G401 (cell line): ENCODE measurements at regions of chr15 and their contacts with region 1.

Region 1: GRCh38 chr15:73617301-73617831 is 15.8 kb downstream of the NPTN start:
- DNase-seq: no peak

Region 2: DNA sequence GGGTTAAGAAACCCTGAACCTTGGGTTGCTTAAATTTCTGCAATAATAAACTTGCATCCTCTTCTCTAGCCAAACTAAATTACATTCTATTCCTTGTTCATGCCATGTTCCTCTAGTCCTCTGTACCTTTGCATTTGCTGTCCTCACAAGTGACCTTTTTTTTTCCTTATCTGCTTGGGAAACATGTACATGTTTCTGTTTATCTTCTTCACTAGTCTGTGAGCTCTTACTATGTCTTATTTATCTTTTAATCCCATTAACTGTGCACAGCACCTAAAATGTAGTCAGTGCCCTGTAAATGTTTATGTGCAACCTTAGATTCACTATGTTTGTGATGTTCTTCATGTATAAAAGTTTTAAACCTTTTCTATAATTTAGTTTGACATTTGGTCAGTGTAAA is 112.5 kb before region 1 on chr15:
- in situ Hi-C with region 1: no loop called
- DNase-seq: no peak

Region 3: GRCh38 chr15:73550190-73550589 is 67.2 kb before region 1 on chr15:
- in situ Hi-C with region 1: no loop called
- DNase-seq: no peak

Region 4: DNA sequence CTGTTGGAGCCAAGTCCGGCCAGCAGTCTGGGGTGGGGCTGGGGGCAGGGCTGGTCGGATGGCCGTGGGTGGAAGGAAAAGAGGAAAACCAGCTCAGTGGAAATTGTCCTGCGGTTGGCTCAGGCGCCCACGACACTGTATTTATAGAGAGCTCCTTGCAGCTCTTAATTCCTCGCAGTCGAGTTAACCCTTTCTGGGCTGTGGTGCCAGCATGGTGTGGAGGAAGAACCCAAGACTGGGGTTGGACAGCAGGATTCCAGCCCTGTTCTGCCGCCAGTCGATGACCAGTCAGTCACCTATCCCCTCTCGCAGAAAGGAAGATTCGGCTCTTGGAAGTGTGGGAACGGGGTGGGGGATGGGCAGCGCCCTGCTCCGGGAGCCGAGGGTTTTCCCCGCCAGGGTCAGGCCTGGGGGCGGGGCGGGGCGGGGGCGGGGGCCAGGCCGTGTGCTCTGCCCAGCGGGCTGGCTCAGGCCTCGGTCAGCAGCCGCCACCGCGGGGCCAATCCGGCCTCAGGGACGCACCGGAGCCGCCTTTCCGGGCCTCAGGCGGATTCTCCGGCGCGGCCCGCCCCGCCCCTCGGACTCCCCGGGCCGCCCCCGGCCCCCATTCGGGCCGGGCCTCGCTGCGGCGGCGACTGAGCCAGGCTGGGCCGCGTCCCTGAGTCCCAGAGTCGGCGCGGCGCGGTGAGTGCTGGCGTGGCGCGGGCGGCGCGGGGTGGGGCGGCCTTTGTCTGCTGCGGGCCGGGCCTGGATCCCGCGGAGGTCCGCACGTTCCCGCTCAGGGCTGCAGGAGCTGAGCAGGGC is 66.6 kb after region 1 on chr15 and contains the start of gene CD276:
- in situ Hi-C with region 1: loop called (anchors 10 kb)
- DNase-seq: peak; percentile 55
- total RNA-seq, gene CD276: 85.5 and 108 TPM in 2 replicates